Pancreas (tissue), 10 donors: ENCODE measurements at regions of chr11 and their contacts with region 1.

Region 1: DNA sequence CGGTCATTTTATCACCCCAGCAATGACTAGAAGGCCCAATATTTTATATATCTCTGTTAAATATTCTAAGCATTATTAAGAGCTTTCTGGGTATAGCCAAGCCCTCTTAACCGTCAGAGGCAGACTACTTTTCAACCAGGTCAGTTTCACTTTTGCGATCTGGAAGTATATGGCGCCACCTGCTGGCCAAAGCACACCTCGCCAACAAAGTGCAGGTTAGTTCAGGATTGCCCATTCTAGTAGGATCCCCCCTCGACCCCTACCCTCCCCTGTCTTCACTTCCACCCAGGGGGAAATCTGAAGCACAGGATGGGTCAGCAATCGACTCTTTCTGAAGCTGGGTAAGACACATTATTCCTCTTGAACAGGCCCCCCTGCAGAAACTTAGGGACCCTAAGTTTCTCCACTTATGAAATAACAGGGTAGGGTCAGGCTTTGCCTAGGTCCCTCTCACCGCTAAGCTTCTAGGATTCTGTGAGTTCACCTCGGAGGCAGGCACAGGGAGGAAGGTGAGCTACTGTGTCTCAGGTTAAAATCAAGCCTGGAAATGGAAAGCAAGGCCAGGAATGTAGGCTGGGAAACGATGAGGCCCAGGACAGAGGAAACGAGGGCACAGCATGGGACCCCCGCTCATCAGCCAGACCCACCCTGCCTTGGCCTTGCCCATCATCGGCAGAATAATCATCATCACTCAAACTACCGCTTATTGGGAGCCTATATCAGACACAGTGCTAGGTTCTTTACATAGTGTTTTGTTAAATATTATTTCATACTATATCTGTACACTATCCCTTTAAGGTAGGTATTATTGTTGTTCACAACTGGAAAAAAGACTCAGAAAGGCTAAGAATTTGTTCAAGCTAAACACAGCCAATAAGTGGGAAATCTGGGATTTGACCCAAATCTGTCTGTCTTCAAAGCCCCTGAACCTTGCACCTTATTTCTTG is 35.6 kb downstream of the KCNJ1 start:
- DNase-seq: peak; percentile 70 to 92 (median 82)
- ATAC-seq: peak; percentile 80 to 96 (median 92)
- H3K4me3 ChIP-seq: no peak overlapping the region
- H3K27ac ChIP-seq: peak overlapping the region in 1 of 4 donors; percentile 15
- H3K4me1 ChIP-seq: peaks cover 6% of the 10 kb centered on the region in 3 donors
- H3K27me3 ChIP-seq: no peaks in the 10 kb centered on the region
- CTCF ChIP-seq: peak; percentile 66 to 88 (median 84)

Region 2: DNA sequence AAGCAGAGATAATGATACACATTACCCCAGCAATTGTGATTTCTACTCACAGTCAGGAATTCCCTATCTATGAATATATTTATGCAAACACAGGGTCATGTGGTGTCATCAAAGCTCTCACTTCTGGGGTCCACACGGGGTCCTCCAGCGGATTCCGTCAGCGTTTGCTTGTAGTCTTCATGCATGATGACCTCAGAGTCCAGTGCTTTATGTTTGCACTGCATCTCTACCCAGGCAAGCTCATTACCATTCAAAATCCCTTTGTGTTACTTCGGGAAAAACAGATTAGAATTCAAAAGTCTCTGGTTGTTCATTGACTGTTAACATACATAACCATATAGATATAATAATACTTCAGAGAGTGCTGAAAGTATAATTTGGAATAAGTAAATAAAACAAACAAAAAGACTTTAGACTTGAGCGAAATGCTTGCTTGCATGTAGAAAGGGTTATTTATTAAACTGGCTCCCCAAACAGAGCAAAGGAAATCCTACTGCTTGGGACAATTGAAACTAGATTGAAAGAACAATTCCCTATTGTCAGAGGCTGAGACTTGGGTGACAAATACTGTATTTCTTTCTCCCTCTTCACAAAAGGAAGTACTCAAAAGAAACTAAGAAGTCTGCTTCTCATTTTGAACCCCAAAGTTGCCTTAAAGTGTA is 667.2 kb before region 1 on chr11:
- intact Hi-C with region 1: loop called in 1 of 3 experiments (anchors 10 kb)
- DNase-seq: no peak
- ATAC-seq: peak in 1 of 4 donors; percentile 36
- H3K4me3 ChIP-seq: no peak overlapping the region
- H3K27ac ChIP-seq: peak overlapping the region in 1 of 4 donors; percentile 19
- H3K4me1 ChIP-seq: no peaks in the 10 kb centered on the region
- H3K27me3 ChIP-seq: no peaks in the 10 kb centered on the region
- CTCF ChIP-seq: no peak